ENCODE measurements at regions of chr19 and their contacts with region 1.

Region 1: DNA sequence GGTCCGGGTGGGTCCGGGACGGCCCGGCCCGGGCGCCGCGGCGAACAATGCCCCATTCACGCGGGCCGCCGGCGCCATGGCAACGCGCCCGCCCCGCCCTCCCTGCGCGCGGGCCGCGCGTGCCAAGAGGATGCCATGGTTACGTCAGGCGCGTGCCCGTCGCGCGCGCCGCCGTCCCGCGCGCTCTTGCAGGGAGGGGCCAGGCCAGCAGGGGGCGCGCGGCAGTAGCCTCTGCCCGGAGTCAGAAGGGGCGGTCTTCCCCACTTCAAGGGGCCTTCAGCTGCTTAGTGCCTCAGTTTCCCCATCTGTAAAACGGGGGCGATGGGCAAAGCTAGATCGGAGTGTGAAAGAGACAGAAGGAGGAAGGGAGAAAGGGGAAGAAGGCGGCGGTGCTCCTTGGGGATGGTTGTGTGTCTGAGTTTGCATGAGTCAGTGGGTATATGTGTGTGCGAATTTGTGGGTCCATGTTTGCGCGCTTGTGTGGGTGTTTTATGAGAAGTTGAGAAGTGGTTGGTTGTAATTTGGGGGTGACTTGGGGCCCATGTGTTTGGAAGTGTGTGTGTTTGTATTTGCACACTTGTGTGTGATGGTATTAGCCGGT is 11.6 kb upstream of the NFIX start:
- DNase-seq: peak; percentile 67 to 73
- H3K4me3 ChIP-seq: no peak overlapping the region
- H3K27ac ChIP-seq: no peak overlapping the region
- H3K4me1 ChIP-seq: peaks cover 4 to 14% of the 10 kb centered on the region in 2 donors
- H3K27me3 ChIP-seq: no peaks in the 10 kb centered on the region
- CTCF ChIP-seq: peak; percentile 75 to 99 (median 98)
- POLR2A ChIP-seq: no peak

Region 2: DNA sequence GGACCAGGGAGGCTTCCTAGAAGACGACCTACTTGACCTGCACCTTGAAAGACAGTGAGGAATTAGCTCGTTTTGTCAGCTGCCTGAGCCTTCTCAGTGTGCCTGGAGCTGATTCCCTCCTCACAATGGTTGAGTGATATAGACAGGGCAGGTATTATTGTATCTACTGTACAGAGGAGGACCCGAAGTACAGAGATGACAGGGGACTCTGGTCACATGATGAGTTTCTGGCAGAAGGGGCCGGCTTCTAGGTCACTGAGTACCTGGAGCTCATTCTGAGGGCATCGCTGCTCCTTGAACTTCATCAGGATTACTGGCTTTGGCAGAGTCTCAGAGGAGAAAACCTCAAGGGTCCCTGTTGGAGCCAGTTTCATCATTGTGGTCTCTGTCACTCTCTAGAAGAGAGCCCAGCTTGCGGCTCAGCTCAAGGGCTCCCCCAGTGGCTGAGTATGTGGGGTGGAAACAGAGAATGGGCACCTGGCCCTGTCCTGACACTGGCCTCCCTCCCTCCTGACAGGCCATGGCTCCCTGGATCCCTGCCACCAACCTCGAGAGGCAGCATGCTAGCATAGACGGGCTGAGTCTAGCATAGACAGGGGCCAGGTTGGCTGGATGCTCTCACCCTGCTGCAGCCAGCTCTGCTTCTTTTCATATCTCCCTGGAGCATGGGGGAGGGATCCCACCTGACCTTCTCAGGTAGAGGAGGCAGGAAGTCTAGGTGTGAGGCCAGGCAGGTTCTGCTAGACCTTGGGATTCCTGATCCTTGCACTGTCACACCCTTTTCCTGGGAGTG is 50.4 kb after region 1 on chr19:
- intact Hi-C with region 1: loop called (anchors 5 kb)
- DNase-seq: peak; percentile 95 to 97
- H3K4me3 ChIP-seq: no peak overlapping the region
- H3K27ac ChIP-seq: peak overlapping the region; percentile 75 to 93 (median 88)
- H3K4me1 ChIP-seq: peaks cover 91 to 98% of the 10 kb centered on the region in 2 donors
- H3K27me3 ChIP-seq: no peaks in the 10 kb centered on the region
- CTCF ChIP-seq: peak; percentile 58 to 85 (median 78)
- POLR2A ChIP-seq: peak in 1 of 2 donors; percentile 22

Region 3: DNA sequence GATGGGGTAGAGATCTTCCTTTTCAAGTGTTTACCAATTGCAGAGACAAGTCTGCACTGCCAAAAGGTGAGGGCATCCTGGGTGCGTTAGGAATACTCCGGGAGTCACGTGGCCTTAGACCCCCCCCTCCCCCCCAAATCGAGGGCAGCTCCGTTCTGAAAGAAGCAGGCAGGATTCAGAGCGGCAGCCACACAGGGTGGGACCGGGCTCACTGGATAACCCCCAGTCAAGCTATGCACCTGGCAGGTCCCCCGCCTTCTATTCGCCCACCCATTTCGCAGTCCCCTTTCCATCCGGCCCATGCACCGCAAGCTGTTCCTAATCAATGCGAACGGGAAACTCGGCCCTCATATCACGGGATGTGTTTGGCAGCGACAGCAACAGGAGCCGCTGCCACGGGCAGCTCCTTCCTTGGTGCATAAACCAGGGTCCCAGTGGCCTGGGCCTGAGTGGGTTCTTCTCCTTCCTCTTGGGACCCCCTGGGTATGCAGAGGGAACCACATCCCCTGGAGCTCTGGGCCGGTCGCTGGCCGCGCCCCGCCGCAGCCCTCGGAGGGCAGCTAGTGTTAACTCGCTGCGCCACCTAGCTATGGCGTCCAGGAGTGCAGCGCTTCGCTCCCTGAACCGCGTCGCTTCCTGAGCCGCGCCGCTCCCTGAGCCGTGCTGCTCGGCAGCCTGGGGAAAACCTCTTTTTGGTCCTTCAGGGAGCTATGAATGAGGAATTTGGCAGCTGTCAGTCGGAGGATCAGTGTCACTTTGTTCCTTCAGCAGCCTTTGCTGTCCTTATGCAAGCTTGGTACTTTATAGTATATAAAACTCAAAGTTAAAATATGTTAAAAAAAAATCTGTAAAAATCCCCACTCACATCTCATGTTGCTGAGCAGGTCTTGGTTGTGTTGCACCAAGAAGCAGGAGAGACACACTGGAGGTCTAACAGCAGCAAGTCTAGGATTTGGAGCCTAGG is 77.6 kb after region 1 on chr19:
- intact Hi-C with region 1: loop called (anchors 2 kb)
- DNase-seq: peak; percentile 87 to 89
- H3K4me3 ChIP-seq: peak overlapping the region in 1 of 3 donors; percentile 30
- H3K27ac ChIP-seq: peak overlapping the region; percentile 60 to 81 (median 74)
- H3K4me1 ChIP-seq: peaks cover 49 to 74% of the 10 kb centered on the region in 2 donors
- H3K27me3 ChIP-seq: no peaks in the 10 kb centered on the region
- CTCF ChIP-seq: peak; percentile 84 to 98 (median 95)
- POLR2A ChIP-seq: no peak

Region 4: DNA sequence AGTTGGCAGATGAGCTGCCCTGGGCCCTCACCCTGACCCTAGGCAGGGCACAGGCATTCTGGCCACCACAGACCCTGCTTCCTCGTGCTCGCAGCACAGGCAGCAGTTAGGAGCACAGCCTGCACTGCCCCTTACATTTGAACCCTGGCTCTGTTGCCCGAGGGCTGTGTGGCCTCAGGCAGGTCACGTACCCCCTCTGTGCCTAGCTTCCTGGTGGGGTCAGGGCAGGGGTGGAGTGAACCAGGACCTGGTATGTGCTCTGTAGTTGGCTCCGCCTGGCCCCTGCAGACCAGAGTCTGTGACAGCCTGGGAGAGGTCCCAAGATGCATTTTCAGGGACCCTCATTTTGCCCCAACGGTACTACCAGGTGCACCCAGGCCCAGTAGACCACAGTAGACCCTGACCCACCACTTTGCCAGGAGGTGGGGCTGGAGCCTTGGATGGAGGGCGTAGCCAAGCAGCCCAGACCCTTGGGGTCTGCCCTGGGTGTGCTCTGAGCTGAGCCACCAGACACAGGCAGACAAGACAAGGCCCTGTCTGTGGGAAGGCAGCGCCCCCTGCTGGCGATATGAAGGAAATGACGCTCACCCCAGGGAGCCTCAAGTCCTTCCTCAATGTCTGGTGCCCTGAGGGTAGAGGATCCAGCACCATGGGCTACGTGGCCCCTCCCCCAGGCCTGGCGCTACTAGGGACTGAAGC is 109.9 kb after region 1 on chr19:
- intact Hi-C with region 1: loop called (anchors 2 kb)
- DNase-seq: peak; percentile 72 to 79
- H3K4me3 ChIP-seq: no peak overlapping the region
- H3K27ac ChIP-seq: peak overlapping the region in 2 of 3 donors; percentile 8 to 18
- H3K4me1 ChIP-seq: peaks cover 10 to 35% of the 10 kb centered on the region in 2 donors
- H3K27me3 ChIP-seq: no peaks in the 10 kb centered on the region
- CTCF ChIP-seq: peak; percentile 87 to 96 (median 92)
- POLR2A ChIP-seq: no peak